Activated T-helper 1 cell treated with anti-CD3 and anti-CD28 coated beads, Interleukin-12 subunit alpha, Interleukin-12 subunit beta, Interleukin-2, Interleukin-4 antibody, amounts not matched to agents 30 ng/mL and 10 ng/mL and 1 ng/mL, durations not matched to agents 14 hours and 24 hours and 36 hours (primary cell): ENCODE measurements at regions of chr14 and their contacts with region 1.

Region 1: GRCh38 chr14:45134051-45134958 is at the start of gene FKBP3:
- DNase-seq: peak; percentile 93
- H3K4me3 Mint-ChIP-seq: peak within 1 kb of the TSS; percentile 98
- H3K27ac Mint-ChIP-seq: peak within 1 kb of the TSS; percentile 97
- H3K4me1 Mint-ChIP-seq: peaks cover 34% of the 10 kb centered on the region
- H3K27me3 Mint-ChIP-seq: no peaks in the 10 kb centered on the region
- total RNA-seq, gene FKBP3: 58.0 and 59.3 TPM in 2 replicates

Region 2: GRCh38 chr14:44897045-44897844 is 237.1 kb before region 1 on chr14:
- intact Hi-C with region 1: loop called (anchors 1 kb)
- DNase-seq: peak; percentile 85
- H3K4me3 Mint-ChIP-seq: peak overlapping the region; percentile 93
- H3K27ac Mint-ChIP-seq: peak overlapping the region; percentile 72
- H3K4me1 Mint-ChIP-seq: peaks cover 24% of the 10 kb centered on the region
- H3K27me3 Mint-ChIP-seq: peaks cover 6% of the 10 kb centered on the region

Region 3: DNA sequence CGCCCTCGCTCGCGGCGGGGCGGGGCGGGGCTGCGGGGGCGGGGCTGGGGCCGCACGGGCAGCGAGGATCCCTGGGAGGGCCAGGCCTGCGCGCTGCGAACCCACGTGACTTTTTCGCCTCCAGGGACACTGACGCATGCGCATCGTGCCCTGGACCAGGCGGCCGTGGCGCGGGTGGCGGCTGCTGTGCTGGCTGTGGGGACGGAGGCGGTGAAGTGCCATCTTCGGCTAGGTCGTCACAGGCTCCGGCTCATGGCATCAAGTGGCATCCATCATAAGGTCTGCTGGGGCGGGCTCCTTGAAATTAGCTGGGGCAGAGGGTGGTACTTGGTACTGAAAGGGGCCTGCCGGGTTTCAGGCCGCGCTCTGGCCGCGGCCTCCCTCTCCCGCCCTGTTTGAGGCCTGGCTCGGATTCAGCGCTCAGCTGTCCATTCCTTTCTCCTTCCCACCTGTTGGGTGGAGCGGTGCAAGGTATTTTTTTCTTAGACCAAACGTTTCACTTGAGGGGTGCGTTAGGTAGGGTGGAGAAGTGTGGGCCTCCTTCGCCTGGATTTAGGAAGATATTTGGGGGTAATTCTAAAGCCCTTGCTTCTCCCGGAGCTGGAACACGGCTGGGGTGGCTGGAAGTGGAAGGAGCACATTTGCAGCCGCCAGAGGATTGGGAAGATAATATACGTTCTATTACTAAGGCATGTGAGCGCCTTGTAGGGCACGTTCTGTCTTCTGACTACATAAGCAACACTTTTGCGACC is 50.2 kb before region 1 on chr14 and contains the start of gene PRPF39:
- intact Hi-C with region 1: loop called (anchors 1 kb)
- DNase-seq: peak; percentile 95
- H3K4me3 Mint-ChIP-seq: peak within 1 kb of the TSS; percentile 97
- H3K27ac Mint-ChIP-seq: peak within 1 kb of the TSS; percentile 95
- H3K4me1 Mint-ChIP-seq: peaks cover 57% of the 10 kb centered on the region
- H3K27me3 Mint-ChIP-seq: no peaks in the 10 kb centered on the region
- total RNA-seq, gene PRPF39: 51.2 and 55.7 TPM in 2 replicates

Region 4: GRCh38 chr14:45114327-45114726 is 20.0 kb before region 1 on chr14:
- intact Hi-C with region 1: loop called (anchors 1 kb)
- DNase-seq: no peak
- H3K4me3 Mint-ChIP-seq: no peak overlapping the region
- H3K27ac Mint-ChIP-seq: peak overlapping the region; percentile 70
- H3K4me1 Mint-ChIP-seq: peaks cover 14% of the 10 kb centered on the region
- H3K27me3 Mint-ChIP-seq: no peaks in the 10 kb centered on the region

Region 5: DNA sequence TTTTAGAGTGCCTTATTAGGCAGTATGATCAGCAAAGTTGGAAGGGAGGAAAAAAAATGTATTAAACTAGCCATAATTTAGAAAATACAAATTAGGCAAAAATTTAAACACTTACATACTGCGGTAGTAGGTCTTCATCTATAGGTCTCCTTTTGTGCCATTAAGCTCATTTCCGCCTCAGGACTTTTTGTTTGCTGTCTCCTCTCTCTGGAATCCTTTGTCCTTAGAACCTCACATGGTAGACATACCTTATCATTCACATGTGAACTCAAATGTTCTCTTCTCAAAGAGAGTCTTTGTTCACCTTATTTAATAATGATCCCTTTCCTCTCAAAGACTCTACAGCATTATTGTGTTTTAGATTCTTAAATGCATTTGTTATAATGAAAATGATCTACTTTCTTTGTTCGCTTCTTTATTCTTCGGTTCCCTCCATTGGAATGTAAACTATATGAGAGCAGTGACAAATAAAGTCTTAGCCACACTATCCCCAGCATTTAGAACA is 16.1 kb after region 1 on chr14:
- intact Hi-C with region 1: no loop called
- DNase-seq: no peak
- H3K4me3 Mint-ChIP-seq: no peak overlapping the region
- H3K27ac Mint-ChIP-seq: no peak overlapping the region
- H3K4me1 Mint-ChIP-seq: peaks cover 5% of the 10 kb centered on the region
- H3K27me3 Mint-ChIP-seq: no peaks in the 10 kb centered on the region

Region 6: GRCh38 chr14:45253068-45253753 is 118.9 kb after region 1 on chr14 and contains the start of gene MIS18BP1:
- intact Hi-C with region 1: loop called (anchors 1 kb)
- DNase-seq: peak; percentile 93
- H3K4me3 Mint-ChIP-seq: peak within 1 kb of the TSS; percentile 94
- H3K27ac Mint-ChIP-seq: peak within 1 kb of the TSS; percentile 98
- H3K4me1 Mint-ChIP-seq: peaks cover 16% of the 10 kb centered on the region
- H3K27me3 Mint-ChIP-seq: peaks cover 3% of the 10 kb centered on the region
- total RNA-seq, gene MIS18BP1: 66.4 and 66.6 TPM in 2 replicates